GM18951 (cell line): ENCODE measurements at regions of chr14 and their contacts with region 1.

Region 1: GRCh38 chr14:63273717-63274655 is 44.7 kb downstream of the GPHB5 start:
- POLR2A ChIP-seq: no peak

Region 2: GRCh38 chr14:62162998-62163589 is 1110.9 kb before region 1 on chr14:
- in situ Hi-C with region 1: loop called (anchors 25 kb)
- POLR2A ChIP-seq: no peak

Region 3: DNA sequence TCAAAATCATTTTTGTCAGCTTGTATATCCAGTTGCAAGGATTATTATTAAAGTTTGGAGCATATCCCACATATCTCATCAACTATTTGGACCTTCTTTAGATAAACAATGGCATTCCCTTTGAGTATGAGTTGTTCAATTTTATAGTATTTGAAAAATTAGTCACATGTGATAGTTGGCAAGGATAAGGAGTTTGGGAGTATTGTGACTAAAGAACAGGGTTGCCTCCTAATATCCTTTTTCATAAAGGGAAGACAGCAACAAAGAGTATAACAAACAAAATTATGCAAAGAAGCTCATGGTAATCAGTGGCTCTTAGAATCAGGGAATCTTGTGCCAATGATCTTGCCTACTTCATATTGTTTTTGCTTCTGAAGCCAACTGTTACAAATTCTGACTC is 197.5 kb before region 1 on chr14:
- in situ Hi-C with region 1: no loop called
- POLR2A ChIP-seq: no peak